Heart left ventricle (tissue), 16 donors: ENCODE measurements at regions of chr16 and their contacts with region 1.

Region 1: DNA sequence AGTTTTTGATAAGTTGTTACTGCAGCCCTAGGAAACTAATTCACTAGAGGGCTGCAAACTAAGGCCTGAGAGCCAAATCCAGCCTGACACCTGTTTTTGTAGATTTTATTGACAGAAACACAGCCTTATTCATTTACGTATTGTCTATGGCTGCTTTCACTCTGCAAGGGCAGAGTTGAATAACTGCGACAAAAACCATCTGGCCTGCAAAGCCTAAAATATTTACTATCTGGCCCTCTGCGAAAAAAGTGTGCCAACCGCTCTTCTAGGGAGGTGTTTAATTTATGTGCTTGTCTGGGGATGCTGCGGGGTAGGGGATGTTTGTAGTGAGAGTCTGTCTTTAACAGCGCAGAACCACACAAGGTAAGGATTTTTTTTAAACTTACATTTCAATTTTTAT is 165.0 kb upstream of the RBFOX1 start:
- DNase-seq: no peak
- ATAC-seq: no peak
- H3K4me3 ChIP-seq: no peak overlapping the region
- H3K27ac ChIP-seq: no peak overlapping the region
- H3K4me1 ChIP-seq: no peaks in the 10 kb centered on the region
- H3K27me3 ChIP-seq: no peaks in the 10 kb centered on the region
- CTCF ChIP-seq: no peak
- POLR2A ChIP-seq: no peak

Region 2: GRCh38 chr16:7182510-7183109 is 15.0 kb after region 1 on chr16:
- intact Hi-C with region 1: loop called in 1 of 10 experiments (anchors 1 kb)
- DNase-seq: no peak
- ATAC-seq: no peak
- H3K4me3 ChIP-seq: no peak overlapping the region
- H3K27ac ChIP-seq: no peak overlapping the region
- H3K4me1 ChIP-seq: no peaks in the 10 kb centered on the region
- H3K27me3 ChIP-seq: no peaks in the 10 kb centered on the region
- CTCF ChIP-seq: no peak
- POLR2A ChIP-seq: no peak